ENCODE measurements at regions of chr16 and their contacts with region 1.

Region 1: GRCh38 chr16:68528686-68529379 is 10.3 kb upstream of the ZFP90 start:
- DNase-seq: peak; percentile 93
- H3K4me3 Mint-ChIP-seq: peak overlapping the region; percentile 59
- H3K27ac Mint-ChIP-seq: peak overlapping the region; percentile 23
- H3K4me1 Mint-ChIP-seq: peaks cover 17% of the 10 kb centered on the region
- H3K27me3 Mint-ChIP-seq: peaks cover 1% of the 10 kb centered on the region

Region 2: DNA sequence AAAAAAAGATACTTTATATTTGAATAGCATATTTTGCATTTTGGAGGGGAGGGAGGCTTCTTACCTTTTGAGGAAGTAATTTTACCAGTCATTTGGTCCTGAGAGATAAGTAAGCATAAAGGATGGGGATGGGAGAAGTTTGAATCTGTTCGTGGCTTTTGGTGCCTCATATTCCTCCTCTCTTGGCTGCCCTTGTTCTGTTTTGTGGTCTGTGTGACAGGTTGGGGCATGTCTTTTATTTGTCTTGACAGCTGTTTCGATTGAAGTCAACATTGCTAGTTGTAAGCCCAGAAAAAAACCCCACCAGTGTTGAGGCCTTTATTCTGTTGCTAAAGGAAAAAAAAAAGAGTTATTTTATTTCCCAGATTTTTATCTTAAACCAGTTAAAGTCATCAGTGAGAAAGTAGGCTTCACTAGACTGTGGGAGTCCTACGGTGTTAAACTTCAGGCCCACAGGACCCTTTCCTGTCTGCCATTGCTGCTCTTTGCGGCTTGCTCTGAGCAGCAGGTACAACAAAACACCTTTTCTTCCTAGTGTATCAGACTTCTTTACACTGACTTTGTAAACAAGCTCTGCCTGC is 253.1 kb before region 1 on chr16:
- CTCF ChIA-PET with region 1: no interaction called
- POLR2A ChIA-PET with region 1: no interaction called
- intact Hi-C with region 1: loop called (anchors 10 kb)
- DNase-seq: peak; percentile 66
- H3K4me3 Mint-ChIP-seq: no peak overlapping the region
- H3K27ac Mint-ChIP-seq: peak overlapping the region; percentile 93
- H3K4me1 Mint-ChIP-seq: peaks cover 67% of the 10 kb centered on the region
- H3K27me3 Mint-ChIP-seq: no peaks in the 10 kb centered on the region

Region 3: DNA sequence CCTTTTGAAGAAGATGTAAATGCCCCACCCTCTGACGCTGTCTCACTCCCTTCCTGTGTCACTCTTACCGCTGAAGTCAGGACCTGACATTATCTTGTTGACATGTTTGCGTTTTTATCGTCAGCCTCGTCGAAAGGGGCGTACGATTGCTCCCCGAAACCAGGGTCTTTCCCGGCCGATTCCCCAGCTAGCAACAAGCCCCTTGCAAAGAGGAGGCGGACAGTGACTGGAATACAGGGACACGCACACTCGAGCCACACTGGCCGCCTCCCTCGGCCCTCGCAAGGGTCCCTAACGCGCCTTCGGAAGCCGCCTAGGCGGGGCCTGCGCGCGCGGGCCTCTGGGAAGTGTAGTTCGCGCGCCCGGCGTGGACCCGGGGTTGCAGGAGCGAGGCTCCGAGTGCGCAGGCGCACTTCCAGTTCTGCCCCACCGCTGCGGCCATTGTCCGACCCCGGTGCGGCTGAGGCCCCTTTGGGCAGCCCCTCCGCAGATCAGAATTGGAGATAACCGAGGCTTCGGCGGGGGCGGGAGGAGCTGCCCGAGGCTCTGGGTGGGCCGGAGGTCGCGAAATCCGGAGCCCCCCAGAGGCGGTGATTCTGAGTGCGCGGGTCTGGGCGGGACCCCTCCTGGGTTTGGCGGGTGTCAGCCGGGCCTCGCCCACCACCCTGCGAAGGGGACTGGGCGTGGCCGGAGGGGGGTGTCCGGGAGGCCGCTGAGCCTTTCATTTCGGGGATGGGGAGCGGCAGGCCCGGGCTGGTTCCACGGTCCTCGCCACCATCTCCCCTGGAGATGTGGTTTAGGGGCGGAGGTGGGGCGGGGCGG is 10.3 kb after region 1 on chr16 and contains the start of gene ZFP90:
- CTCF ChIA-PET with region 1: interaction called, 29 read pairs
- POLR2A ChIA-PET with region 1: interaction called, 4 read pairs
- intact Hi-C with region 1: loop called (anchors 1 kb)
- DNase-seq: peak; percentile 90
- H3K4me3 Mint-ChIP-seq: peak within 1 kb of the TSS; percentile 94
- H3K27ac Mint-ChIP-seq: peak within 1 kb of the TSS; percentile 98
- H3K4me1 Mint-ChIP-seq: peaks cover 16% of the 10 kb centered on the region
- H3K27me3 Mint-ChIP-seq: no peaks in the 10 kb centered on the region
- total RNA-seq, gene ZFP90: 36.6 to 40.2 TPM

Region 4: DNA sequence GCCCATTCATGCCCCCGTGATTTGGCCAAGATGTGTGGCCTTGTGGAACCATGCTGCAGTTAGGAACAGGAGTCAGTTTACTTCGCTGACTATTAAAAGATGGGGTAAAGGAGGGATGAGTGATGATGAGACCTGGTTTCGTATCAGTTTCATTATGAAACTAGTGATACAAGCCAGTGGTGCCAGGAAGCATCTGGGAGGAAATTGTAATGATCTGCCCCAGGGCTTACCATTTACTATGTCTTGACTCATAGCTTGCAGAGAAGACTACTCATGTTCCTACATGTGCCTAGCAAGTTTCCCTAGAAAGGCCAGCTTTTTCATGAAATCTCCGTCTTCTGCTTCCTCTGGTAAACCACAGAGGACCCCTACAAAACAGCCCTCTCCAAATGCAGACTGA is 139.4 kb after region 1 on chr16:
- CTCF ChIA-PET with region 1: interaction called, 6 read pairs
- POLR2A ChIA-PET with region 1: no interaction called
- intact Hi-C with region 1: loop called (anchors 1 kb)
- DNase-seq: peak; percentile 65
- H3K4me3 Mint-ChIP-seq: no peak overlapping the region
- H3K27ac Mint-ChIP-seq: peak overlapping the region; percentile 75
- H3K4me1 Mint-ChIP-seq: peaks cover 24% of the 10 kb centered on the region
- H3K27me3 Mint-ChIP-seq: peaks cover 2% of the 10 kb centered on the region

Region 5: DNA sequence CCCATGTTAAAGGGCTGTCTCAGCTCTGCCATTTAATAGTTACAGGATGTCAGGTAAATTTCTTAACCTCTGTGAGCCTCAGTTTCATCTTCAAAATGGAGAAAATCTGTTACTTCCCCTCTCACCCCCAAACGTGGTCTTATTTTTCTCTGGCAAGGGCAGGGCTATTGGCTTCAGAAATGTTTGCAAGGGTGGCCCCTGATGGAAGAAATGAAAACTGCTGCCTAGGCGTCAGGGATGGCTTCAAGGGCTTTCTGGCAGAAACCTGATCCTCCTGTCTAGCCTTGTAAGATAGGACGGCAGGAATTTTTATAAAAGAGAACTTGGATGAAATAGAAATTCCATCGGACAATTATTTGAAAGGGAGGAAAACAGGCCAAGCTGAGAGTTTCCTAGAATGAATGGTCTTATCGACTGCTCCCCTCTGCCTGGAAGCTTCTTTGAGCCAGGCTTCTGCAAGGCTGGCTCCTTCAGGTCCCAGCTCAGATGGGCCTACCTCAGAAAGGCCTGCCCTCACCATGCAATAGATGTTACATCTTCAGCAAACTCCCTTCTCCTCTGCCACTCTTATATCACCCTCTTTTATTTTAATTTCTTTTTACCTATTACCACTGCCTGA is 271.5 kb after region 1 on chr16:
- CTCF ChIA-PET with region 1: interaction called, 25 read pairs
- POLR2A ChIA-PET with region 1: no interaction called
- intact Hi-C with region 1: loop called (anchors 2 kb)
- DNase-seq: peak; percentile 81
- H3K4me3 Mint-ChIP-seq: no peak overlapping the region
- H3K27ac Mint-ChIP-seq: no peak overlapping the region
- H3K4me1 Mint-ChIP-seq: peaks cover 7% of the 10 kb centered on the region
- H3K27me3 Mint-ChIP-seq: peaks cover 2% of the 10 kb centered on the region

Region 6: GRCh38 chr16:69123910-69124309 is 595.1 kb after region 1 on chr16:
- CTCF ChIA-PET with region 1: interaction called, 19 read pairs
- POLR2A ChIA-PET with region 1: no interaction called
- intact Hi-C with region 1: no loop called
- DNase-seq: peak; percentile 57
- H3K4me3 Mint-ChIP-seq: no peak overlapping the region
- H3K27ac Mint-ChIP-seq: no peak overlapping the region
- H3K4me1 Mint-ChIP-seq: peaks cover 26% of the 10 kb centered on the region
- H3K27me3 Mint-ChIP-seq: no peaks in the 10 kb centered on the region

Region 7: GRCh38 chr16:69286941-69287713 is 758.3 kb after region 1 on chr16:
- CTCF ChIA-PET with region 1: interaction called, 3 read pairs
- POLR2A ChIA-PET with region 1: no interaction called
- intact Hi-C with region 1: loop called (anchors 2 kb)
- DNase-seq: no peak
- H3K4me3 Mint-ChIP-seq: no peak overlapping the region
- H3K27ac Mint-ChIP-seq: peak overlapping the region; percentile 29
- H3K4me1 Mint-ChIP-seq: peaks cover 3% of the 10 kb centered on the region
- H3K27me3 Mint-ChIP-seq: no peaks in the 10 kb centered on the region

Region 8: GRCh38 chr16:69443927-69444631 is 915.2 kb after region 1 on chr16:
- CTCF ChIA-PET with region 1: no interaction called
- POLR2A ChIA-PET with region 1: no interaction called
- intact Hi-C with region 1: no loop called
- DNase-seq: peak; percentile 41
- H3K4me3 Mint-ChIP-seq: peak overlapping the region; percentile 62
- H3K27ac Mint-ChIP-seq: peak overlapping the region; percentile 88
- H3K4me1 Mint-ChIP-seq: peaks cover 39% of the 10 kb centered on the region
- H3K27me3 Mint-ChIP-seq: no peaks in the 10 kb centered on the region

Measured in activated CD4-positive, alpha-beta memory T cell treated with anti-CD3 and anti-CD28 coated beads for 36 hours (primary cell).